Adrenal gland (tissue), 19 donors: ENCODE measurements at regions of chr7 and their contacts with region 1.

Region 1: GRCh38 chr7:15525652-15526263 is 36.1 kb downstream of the AGMO start:
- DNase-seq: no peak
- H3K4me3 ChIP-seq: no peak overlapping the region
- H3K27ac ChIP-seq: no peak overlapping the region
- H3K4me1 ChIP-seq: no peaks in the 10 kb centered on the region
- H3K27me3 ChIP-seq: no peaks in the 10 kb centered on the region
- CTCF ChIP-seq: no peak
- POLR2A ChIP-seq: no peak

Region 2: DNA sequence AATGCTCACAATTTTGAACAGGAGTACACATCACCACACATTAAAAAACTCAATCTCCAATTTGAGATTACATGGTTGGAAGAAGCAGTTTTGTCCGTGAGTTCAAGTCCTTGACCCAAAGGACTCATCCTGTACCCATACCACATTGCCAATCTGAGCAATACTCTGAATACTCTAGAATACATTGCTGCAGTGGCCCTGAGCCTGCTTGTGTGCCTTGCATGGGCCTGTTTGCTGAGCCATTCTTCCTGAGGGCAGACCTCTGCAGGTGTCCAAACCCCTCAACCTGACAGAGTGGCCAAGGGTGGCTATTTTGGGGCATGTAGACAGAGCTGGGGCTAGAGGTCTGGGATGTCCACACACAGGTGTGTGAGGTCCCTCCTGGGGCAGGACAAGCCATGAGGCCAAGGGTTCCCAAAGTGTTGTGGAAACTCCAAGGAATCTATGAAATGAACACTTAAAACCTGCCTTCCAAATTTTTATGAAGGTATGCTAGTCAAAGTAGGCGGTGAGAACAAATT is 20.6 kb after region 1 on chr7:
- intact Hi-C with region 1: loop called in 1 of 2 experiments (anchors 2 kb)
- DNase-seq: no peak
- H3K4me3 ChIP-seq: no peak overlapping the region
- H3K27ac ChIP-seq: no peak overlapping the region
- H3K4me1 ChIP-seq: no peaks in the 10 kb centered on the region
- H3K27me3 ChIP-seq: no peaks in the 10 kb centered on the region
- CTCF ChIP-seq: no peak
- POLR2A ChIP-seq: no peak

Region 3: DNA sequence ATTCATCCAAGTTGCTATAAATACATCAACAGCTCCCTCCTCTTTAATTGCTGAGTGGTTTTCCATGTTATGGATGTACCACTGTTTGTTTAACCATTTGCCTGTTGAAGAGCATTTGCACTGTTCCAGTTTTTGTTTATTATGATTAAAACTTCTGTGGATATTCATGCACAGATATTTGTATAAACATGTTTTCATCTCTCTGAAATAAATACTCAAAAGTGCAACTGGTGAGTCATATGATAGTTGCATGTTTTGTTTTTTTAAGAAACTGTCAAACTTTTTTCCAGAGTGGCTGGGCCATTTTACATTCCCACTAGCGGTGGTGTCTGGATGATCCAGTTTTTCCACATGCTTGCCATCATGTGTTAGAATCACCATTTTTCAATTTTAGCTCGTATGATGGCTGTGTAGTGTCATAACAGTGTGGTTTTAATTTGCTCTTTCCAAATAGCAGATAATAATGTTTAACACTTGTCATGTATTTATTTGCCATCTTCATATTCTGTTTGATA is 127.1 kb after region 1 on chr7:
- intact Hi-C with region 1: no loop called
- DNase-seq: no peak
- H3K4me3 ChIP-seq: no peak overlapping the region
- H3K27ac ChIP-seq: no peak overlapping the region
- H3K4me1 ChIP-seq: no peaks in the 10 kb centered on the region
- H3K27me3 ChIP-seq: no peaks in the 10 kb centered on the region
- CTCF ChIP-seq: no peak
- POLR2A ChIP-seq: no peak